ENCODE measurements at regions of chr3 and their contacts with region 1.

Region 1: DNA sequence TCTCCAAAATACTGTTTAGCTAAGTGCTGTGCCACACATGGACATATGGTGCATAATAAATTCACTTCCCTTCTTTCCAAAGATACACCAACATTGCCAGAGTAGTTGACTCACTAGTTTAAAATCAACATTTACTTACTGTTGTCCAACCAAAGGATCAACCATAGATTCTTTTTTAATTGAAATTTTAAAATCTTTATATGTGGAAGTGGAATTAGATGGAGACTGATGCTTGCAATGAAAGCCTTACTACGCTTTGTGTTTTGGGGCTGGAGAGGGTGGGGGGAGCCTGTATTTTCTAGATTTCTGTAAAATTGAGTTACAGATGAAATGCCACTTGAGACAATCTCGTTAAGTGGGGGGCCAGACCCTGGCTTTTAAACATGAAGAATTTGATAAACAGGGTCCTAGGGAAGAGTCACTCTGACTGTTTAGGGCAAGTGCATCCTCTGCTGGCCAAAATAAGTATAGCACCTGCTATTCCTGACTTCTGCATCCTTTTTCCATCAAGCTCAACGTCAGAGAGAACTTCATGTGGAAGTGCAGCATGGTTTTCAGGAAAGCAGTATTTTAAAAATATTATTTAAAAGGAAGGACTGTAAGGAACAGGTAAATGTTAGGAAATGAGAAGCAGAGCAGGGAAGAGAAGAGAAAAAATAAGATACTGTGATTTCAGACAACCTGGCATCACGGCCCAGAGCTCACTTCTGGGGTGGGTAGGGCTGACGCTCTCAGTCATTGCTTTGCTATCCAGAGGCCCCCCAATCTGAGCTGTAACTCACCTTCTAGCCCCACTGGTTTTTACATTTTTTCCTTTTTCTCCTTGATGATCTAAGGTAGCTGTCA is 76.7 kb downstream of the BOC start:
- DNase-seq: peak; percentile 62
- ATAC-seq: no peak
- H3K4me3 Mint-ChIP-seq: no peak overlapping the region
- H3K27ac Mint-ChIP-seq: no peak overlapping the region
- H3K4me1 Mint-ChIP-seq: no peaks in the 10 kb centered on the region
- H3K27me3 Mint-ChIP-seq: no peaks in the 10 kb centered on the region

Region 2: GRCh38 chr3:113051302-113051711 is 236.7 kb before region 1 on chr3:
- CTCF ChIA-PET with region 1: interaction called, 62 read pairs
- POLR2A ChIA-PET with region 1: no interaction called
- DNase-seq: peak; percentile 92
- ATAC-seq: peak; percentile 99
- H3K4me3 Mint-ChIP-seq: no peak overlapping the region
- H3K27ac Mint-ChIP-seq: no peak overlapping the region
- H3K4me1 Mint-ChIP-seq: peaks cover 2% of the 10 kb centered on the region
- H3K27me3 Mint-ChIP-seq: no peaks in the 10 kb centered on the region

Region 3: DNA sequence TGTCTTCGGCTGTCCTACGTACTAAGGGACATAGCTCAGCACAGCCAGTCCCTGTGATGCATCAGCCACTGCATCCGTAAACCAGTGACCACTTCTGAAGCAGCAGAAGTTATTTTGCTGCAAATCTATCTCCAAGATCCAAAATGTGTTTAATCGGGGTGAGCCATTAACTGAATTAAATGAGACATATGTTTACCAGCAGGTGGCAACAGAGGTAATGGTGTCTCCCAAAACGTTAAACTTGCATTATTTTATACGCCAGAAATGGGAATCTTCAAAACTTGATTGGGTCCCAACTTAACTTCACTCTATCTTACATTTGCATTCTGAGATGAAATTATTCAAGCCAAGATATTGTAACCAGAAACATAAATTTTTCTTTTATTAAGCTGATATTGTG is 152.0 kb before region 1 on chr3:
- CTCF ChIA-PET with region 1: interaction called, 10 read pairs
- POLR2A ChIA-PET with region 1: no interaction called
- DNase-seq: no peak
- ATAC-seq: no peak
- H3K4me3 Mint-ChIP-seq: no peak overlapping the region
- H3K27ac Mint-ChIP-seq: no peak overlapping the region
- H3K4me1 Mint-ChIP-seq: no peaks in the 10 kb centered on the region
- H3K27me3 Mint-ChIP-seq: no peaks in the 10 kb centered on the region